Activated CD4-positive, alpha-beta memory T cell treated with anti-CD3 and anti-CD28 coated beads, Interleukin-2, amount 10 ng/mL, durations not matched to agents 7 days and 5 days (primary cell): ENCODE measurements at regions of chr3 and their contacts with region 1.

Region 1: DNA sequence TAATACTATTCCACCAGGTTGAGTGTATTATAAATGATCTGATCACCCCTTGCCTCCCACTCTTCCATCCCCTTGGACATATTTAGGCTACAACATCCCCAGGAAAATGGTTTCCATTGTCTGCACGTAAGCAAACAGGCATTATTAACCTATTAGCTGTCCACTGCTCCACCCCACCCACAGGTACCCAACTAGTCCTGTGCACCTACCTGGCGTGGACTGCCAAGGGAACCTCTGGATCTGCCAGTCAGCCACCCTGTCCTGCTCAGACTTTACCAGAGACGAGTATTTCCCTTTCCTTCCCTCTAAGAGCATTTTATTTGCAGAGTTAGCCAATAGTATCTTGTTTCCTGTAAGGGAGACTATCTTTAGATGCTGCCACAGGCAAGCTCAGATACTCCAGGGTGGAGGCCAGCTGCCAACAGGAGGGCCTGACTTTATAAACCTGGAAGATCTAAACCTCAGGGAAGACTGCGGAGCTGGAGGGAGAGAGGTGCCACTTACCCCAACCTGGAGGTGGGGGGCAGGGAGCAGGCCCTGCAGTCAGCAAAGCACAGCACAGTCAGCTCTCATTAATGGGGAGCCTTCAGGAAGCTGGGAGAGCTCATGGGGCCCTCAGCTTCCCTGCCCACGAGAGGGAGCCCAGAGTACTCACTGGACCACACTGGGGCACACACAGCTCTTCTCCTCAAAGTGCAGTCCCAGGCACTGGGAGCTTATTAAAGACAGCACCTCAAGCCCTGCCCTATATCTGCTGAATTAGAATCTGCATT is at the start of gene CX3CR1:
- DNase-seq: no peak
- H3K4me3 Mint-ChIP-seq: peak within 1 kb of the TSS; percentile 50
- H3K27ac Mint-ChIP-seq: no peak within 1 kb of the TSS
- H3K4me1 Mint-ChIP-seq: peaks cover 86% of the 10 kb centered on the region
- H3K27me3 Mint-ChIP-seq: peaks cover 11% of the 10 kb centered on the region
- total RNA-seq, gene CX3CR1: 5.5 to 6.2 TPM

Region 2: GRCh38 chr3:39267631-39268548 is 12.0 kb before region 1 on chr3:
- CTCF ChIA-PET with region 1: interaction called, 5 read pairs
- POLR2A ChIA-PET with region 1: interaction called, 27 read pairs
- DNase-seq: peak; percentile 83
- H3K4me3 Mint-ChIP-seq: peak overlapping the region; percentile 38
- H3K27ac Mint-ChIP-seq: peak overlapping the region; percentile 95
- H3K4me1 Mint-ChIP-seq: peaks cover 47% of the 10 kb centered on the region
- H3K27me3 Mint-ChIP-seq: peaks cover 11% of the 10 kb centered on the region

Region 3: GRCh38 chr3:39485547-39485946 is 205.6 kb after region 1 on chr3:
- CTCF ChIA-PET with region 1: no interaction called
- POLR2A ChIA-PET with region 1: no interaction called
- DNase-seq: no peak
- H3K4me3 Mint-ChIP-seq: no peak overlapping the region
- H3K27ac Mint-ChIP-seq: no peak overlapping the region
- H3K4me1 Mint-ChIP-seq: no peaks in the 10 kb centered on the region
- H3K27me3 Mint-ChIP-seq: peaks cover 17% of the 10 kb centered on the region

Region 4: GRCh38 chr3:39601241-39601640 is 321.3 kb after region 1 on chr3:
- CTCF ChIA-PET with region 1: no interaction called
- POLR2A ChIA-PET with region 1: no interaction called
- DNase-seq: no peak
- H3K4me3 Mint-ChIP-seq: no peak overlapping the region
- H3K27ac Mint-ChIP-seq: no peak overlapping the region
- H3K4me1 Mint-ChIP-seq: no peaks in the 10 kb centered on the region
- H3K27me3 Mint-ChIP-seq: peaks cover 10% of the 10 kb centered on the region